Heart left ventricle (tissue), 16 donors: ENCODE measurements at regions of chr9 and their contacts with region 1.

Region 1: DNA sequence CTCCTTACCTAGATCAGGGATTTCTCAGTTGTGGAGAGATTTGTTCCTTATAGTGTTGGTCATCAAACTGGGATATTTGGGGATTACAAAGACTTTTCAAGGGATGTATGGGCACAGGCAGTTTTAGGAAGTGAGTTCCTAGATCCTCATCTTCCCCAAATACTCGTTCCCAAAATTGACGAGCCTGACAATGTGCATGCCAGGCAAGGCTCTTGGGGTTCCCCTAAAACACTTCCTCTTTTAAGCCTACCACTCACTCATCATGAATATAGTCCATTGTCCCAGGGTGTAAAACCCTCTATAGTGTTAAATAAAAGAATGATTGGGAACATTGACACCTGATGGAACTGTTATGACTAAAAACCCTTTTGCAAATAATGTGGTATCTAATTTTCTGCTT is 26.4 kb downstream of the PDCD1LG2 start:
- DNase-seq: no peak
- ATAC-seq: no peak
- H3K4me3 ChIP-seq: no peak overlapping the region
- H3K27ac ChIP-seq: no peak overlapping the region
- H3K4me1 ChIP-seq: peaks cover 0 to 22% (median 0%) of the 10 kb centered on the region in 12 donors
- H3K27me3 ChIP-seq: no peaks in the 10 kb centered on the region
- CTCF ChIP-seq: no peak
- POLR2A ChIP-seq: no peak

Region 2: DNA sequence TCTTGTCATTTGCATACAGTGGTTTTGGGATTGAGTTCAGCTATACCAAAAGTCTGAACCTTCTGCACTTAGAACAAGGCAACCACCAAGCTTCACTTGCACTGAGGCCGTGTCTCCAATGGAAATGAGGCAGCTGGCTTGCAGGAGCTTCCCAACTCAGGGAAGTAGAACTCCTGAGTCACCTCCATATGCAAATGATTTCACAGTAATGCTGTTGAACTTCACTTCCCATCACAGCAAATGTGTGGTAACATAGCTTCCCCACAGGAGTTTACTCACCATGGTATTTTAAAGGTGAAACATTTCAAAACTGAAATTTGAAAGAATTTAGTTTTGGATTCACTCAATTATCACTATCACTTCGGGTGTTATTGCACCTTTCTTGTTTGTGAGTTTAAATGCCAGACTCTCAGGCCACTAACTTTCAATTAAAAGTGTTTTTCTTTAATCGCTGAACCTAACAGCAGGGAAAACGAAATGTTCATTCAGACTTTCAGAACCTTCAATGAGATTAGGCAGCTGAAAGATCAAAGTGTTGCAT is 77.3 kb before region 1 on chr9:
- intact Hi-C with region 1: no loop called
- DNase-seq: no peak
- ATAC-seq: peak in 1 of 4 donors; percentile 48
- H3K4me3 ChIP-seq: no peak overlapping the region
- H3K27ac ChIP-seq: peak overlapping the region in 1 of 12 donors; percentile 50
- H3K4me1 ChIP-seq: peaks cover 0 to 58% (median 0%) of the 10 kb centered on the region in 12 donors
- H3K27me3 ChIP-seq: no peaks in the 10 kb centered on the region
- CTCF ChIP-seq: no peak
- POLR2A ChIP-seq: no peak

Region 3: DNA sequence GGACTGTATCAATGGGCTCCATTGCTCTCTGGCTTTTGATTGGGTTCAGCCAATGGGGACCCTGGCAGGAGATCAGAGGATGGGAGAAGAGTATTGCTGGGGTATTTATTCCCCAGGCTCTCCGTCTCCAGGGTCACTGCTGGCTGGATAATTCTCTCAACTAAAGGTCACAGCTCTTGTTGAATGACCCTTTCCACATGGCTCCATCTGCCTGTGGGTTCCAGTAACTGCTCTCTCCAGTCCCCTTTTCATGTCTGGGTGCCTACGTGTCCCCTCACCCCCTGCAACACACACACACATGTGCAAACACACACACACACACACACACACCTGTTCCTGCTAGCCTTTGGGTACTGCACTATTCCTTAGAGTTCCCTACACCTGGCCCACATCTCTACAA is 38.3 kb after region 1 on chr9:
- intact Hi-C with region 1: loop called in 1 of 10 experiments (anchors 5 kb)
- DNase-seq: no peak
- ATAC-seq: peak in 2 of 4 donors; percentile 45 to 61
- H3K4me3 ChIP-seq: no peak overlapping the region
- H3K27ac ChIP-seq: no peak overlapping the region
- H3K4me1 ChIP-seq: peaks cover 0 to 18% (median 9%) of the 10 kb centered on the region in 12 donors
- H3K27me3 ChIP-seq: no peaks in the 10 kb centered on the region
- CTCF ChIP-seq: no peak
- POLR2A ChIP-seq: no peak